Natural killer cell (primary cell): ENCODE measurements at regions of chr13 and their contacts with region 1.

Region 1: GRCh38 chr13:102580552-102581169 is 16.1 kb upstream of the TPP2 start:
- DNase-seq: peak in 1 of 2 donors; percentile 84
- ATAC-seq: peak; percentile 76 to 89 (median 82)
- H3K4me3 ChIP-seq: no peak overlapping the region
- H3K4me3 Mint-ChIP-seq: no peak overlapping the region
- H3K27ac ChIP-seq: no peak overlapping the region
- H3K27ac Mint-ChIP-seq: no peak overlapping the region
- H3K4me1 ChIP-seq: peaks cover 4% of the 10 kb centered on the region
- H3K4me1 Mint-ChIP-seq: peaks cover 8 to 15% of the 10 kb centered on the region in 2 donors
- H3K27me3 ChIP-seq: no peaks in the 10 kb centered on the region
- H3K27me3 Mint-ChIP-seq: peaks cover 5 to 6% of the 10 kb centered on the region in 2 donors
- CTCF ChIP-seq: peak; percentile 92

Region 2: GRCh38 chr13:102657630-102658029 is 77.0 kb after region 1 on chr13:
- intact Hi-C with region 1: loop called (anchors 2 kb)
- DNase-seq: peak in 1 of 2 donors; percentile 22
- ATAC-seq: peak in 1 of 3 donors; percentile 38
- H3K4me3 ChIP-seq: no peak overlapping the region
- H3K4me3 Mint-ChIP-seq: no peak overlapping the region
- H3K27ac ChIP-seq: no peak overlapping the region
- H3K27ac Mint-ChIP-seq: no peak overlapping the region
- H3K4me1 ChIP-seq: no peaks in the 10 kb centered on the region
- H3K4me1 Mint-ChIP-seq: peaks cover 0 to 6% of the 10 kb centered on the region in 2 donors
- H3K27me3 ChIP-seq: no peaks in the 10 kb centered on the region
- H3K27me3 Mint-ChIP-seq: no peaks in the 10 kb centered on the region
- CTCF ChIP-seq: peak; percentile 28

Region 3: GRCh38 chr13:102693781-102694180 is 113.1 kb after region 1 on chr13:
- intact Hi-C with region 1: no loop called
- DNase-seq: no peak
- ATAC-seq: no peak
- H3K4me3 ChIP-seq: no peak overlapping the region
- H3K4me3 Mint-ChIP-seq: no peak overlapping the region
- H3K27ac ChIP-seq: no peak overlapping the region
- H3K27ac Mint-ChIP-seq: no peak overlapping the region
- H3K4me1 ChIP-seq: no peaks in the 10 kb centered on the region
- H3K4me1 Mint-ChIP-seq: peaks cover under 1% of the 10 kb centered on the region in 2 donors
- H3K27me3 ChIP-seq: no peaks in the 10 kb centered on the region
- H3K27me3 Mint-ChIP-seq: peaks cover 28 to 57% of the 10 kb centered on the region in 2 donors
- CTCF ChIP-seq: no peak

Region 4: GRCh38 chr13:102724923-102725322 is 144.3 kb after region 1 on chr13:
- intact Hi-C with region 1: loop called (anchors 1 kb)
- DNase-seq: peak in 1 of 2 donors; percentile 40
- ATAC-seq: peak; percentile 56 to 59 (median 57)
- H3K4me3 ChIP-seq: no peak overlapping the region
- H3K4me3 Mint-ChIP-seq: no peak overlapping the region
- H3K27ac ChIP-seq: no peak overlapping the region
- H3K27ac Mint-ChIP-seq: no peak overlapping the region
- H3K4me1 ChIP-seq: peaks cover 9% of the 10 kb centered on the region
- H3K4me1 Mint-ChIP-seq: peaks cover 20 to 28% of the 10 kb centered on the region in 2 donors
- H3K27me3 ChIP-seq: no peaks in the 10 kb centered on the region
- H3K27me3 Mint-ChIP-seq: peaks cover 10 to 13% of the 10 kb centered on the region in 2 donors
- CTCF ChIP-seq: peak; percentile 12

Region 5: GRCh38 chr13:102800145-102801041 is 219.7 kb after region 1 on chr13:
- intact Hi-C with region 1: loop called (anchors 1 kb)
- DNase-seq: peak; percentile 82 to 87
- ATAC-seq: peak; percentile 85 to 91 (median 86)
- H3K4me3 ChIP-seq: peak overlapping the region; percentile 50
- H3K4me3 Mint-ChIP-seq: peak overlapping the region; percentile 96
- H3K27ac ChIP-seq: peak overlapping the region; percentile 47
- H3K27ac Mint-ChIP-seq: peak overlapping the region; percentile 79 to 88
- H3K4me1 ChIP-seq: peaks cover 21% of the 10 kb centered on the region
- H3K4me1 Mint-ChIP-seq: peaks cover 30 to 42% of the 10 kb centered on the region in 2 donors
- H3K27me3 ChIP-seq: peaks cover 2% of the 10 kb centered on the region
- H3K27me3 Mint-ChIP-seq: peaks cover 0 to 3% of the 10 kb centered on the region in 2 donors
- CTCF ChIP-seq: peak; percentile 82